Right ventricle myocardium inferior (tissue), 1 donor: ENCODE measurements at regions of chr6 and their contacts with region 1.

Region 1: DNA sequence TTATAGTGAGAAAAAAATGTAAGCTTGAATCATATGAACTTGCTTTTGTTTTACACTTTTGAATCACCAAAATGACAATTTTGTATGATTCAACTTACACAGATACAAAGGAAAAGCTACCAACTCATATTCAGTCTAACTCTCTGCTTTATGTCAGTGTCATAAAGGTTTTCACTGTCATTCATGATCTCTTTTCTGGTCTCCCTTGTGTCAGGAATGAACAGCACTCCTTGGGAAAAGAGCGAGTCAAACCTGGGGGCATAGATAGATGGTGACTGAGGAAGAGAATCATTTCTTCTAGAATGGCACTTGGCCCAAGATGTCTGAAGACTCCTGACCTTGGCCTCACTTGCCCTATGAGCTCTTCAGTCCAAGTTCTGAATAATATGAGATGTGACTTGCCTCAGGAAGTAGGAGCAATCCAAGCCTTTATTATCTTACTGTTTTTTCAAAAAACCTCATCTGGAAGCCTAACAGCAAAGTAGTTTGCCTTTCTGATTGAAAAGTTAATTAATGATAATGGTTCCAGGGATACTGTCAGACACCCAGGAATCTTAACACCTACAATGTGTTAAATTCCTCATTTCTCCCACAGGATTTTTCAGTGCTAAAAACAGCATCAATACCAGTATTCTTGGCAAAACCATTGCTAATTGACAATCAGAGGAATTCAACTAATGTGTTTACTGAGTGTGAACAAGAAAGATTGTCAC is 270.0 kb upstream of the HSF2 start:
- DNase-seq: no peak
- ATAC-seq: peak; percentile 27

Region 2: GRCh38 chr6:121436960-121437850 is 692.3 kb before region 1 on chr6:
- intact Hi-C with region 1: loop called (anchors 2 kb)
- DNase-seq: no peak
- ATAC-seq: peak; percentile 40

Region 3: DNA sequence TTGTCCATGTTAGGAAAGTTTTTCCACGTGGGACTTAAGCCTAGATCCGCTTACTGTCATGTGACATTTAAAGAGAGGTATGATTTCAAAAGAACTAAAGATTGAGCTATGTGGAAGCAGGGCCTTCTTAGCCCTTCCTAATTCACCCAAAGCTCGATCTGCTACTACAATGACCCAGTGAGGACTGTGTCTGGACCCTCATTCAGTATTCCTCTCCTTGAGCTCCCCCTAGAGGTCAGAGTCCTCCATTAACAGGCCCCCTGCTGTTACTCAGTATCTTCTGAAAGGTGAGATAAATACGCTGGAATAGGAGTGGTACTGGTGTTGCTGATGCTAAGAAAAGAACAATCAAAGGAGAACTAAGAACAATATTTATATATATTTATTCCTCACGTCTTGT is 280.0 kb before region 1 on chr6:
- intact Hi-C with region 1: loop called (anchors 5 kb)
- DNase-seq: no peak
- ATAC-seq: peak; percentile 78

Region 4: DNA sequence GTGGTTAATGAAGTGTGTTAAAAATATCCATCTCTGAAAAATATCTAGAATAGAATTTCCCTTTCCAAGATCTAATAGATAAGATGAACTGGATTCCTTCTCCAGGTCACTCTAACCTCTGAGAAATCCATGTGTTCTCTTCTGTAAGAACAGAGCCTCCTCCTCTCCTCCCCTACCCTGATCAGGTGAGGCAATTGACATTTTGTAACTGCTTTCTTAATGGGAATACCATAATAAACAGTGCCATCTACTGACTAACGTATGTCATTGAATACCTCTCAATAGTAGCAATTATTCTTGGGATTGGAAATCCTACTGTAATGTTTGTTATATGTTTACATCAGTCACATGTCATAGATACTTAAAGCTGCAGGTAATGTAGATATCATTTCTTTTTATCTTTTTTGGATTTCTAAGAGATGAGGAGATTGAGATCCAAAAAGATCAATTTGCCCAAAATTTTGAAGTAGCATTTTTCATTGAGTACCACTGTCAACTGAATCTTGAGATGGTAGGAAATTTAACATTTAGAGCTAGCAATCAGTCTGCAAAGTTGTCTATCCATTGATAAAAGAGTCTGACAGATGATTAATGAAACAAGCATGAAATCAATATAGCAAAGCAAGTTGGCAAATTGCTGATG is 95.8 kb before region 1 on chr6:
- intact Hi-C with region 1: loop called (anchors 10 kb)
- DNase-seq: no peak
- ATAC-seq: peak; percentile 87

Region 5: DNA sequence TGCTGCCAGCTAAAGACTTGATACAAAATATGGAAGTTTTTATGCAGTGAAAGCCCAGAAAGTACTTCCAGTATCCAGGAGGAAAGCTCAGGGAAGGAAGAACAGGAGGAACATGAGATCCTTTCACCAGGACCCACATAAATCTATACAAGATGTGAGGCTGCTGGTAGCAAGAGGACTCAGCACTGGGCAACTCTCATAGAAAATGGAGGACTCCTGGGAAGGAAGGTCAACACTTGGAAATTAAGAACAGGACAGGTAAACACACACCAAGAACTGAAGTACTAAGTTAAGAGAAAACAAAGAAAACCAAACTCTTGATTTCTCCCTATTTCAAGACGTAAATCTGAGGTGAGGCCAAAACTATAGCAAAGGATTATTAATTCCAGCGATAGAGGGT is 49.5 kb after region 1 on chr6:
- intact Hi-C with region 1: loop called (anchors 5 kb)
- DNase-seq: no peak
- ATAC-seq: no peak